CD14-positive monocyte (primary cell): ENCODE measurements at regions of chr11 and their contacts with region 1.

Region 1: GRCh38 chr11:73242251-73243079 is 24.4 kb downstream of the P2RY2 start:
- DNase-seq: peak; percentile 29 to 70 (median 53)
- H3K4me3 ChIP-seq: no peak overlapping the region
- H3K4me3 Mint-ChIP-seq: peak overlapping the region in 1 of 2 donors; percentile 59
- H3K27ac ChIP-seq: peak overlapping the region; percentile 31 to 52
- H3K27ac Mint-ChIP-seq: peak overlapping the region in 6 of 7 donors; percentile 3 to 78 (median 48)
- H3K4me1 ChIP-seq: peaks cover 0 to 6% of the 10 kb centered on the region in 2 donors
- H3K4me1 Mint-ChIP-seq: peaks cover 19% of the 10 kb centered on the region
- H3K27me3 ChIP-seq: no peaks in the 10 kb centered on the region
- H3K27me3 Mint-ChIP-seq: no peaks in the 10 kb centered on the region
- CTCF ChIP-seq: peak; percentile 96

Region 2: GRCh38 chr11:72831513-72832300 is 410.8 kb before region 1 on chr11:
- intact Hi-C with region 1: loop called (anchors 2 to 10 kb)
- DNase-seq: peak; percentile 49 to 66 (median 64)
- H3K4me3 ChIP-seq: no peak overlapping the region
- H3K4me3 Mint-ChIP-seq: no peak overlapping the region
- H3K27ac ChIP-seq: peak overlapping the region; percentile 36 to 57
- H3K27ac Mint-ChIP-seq: peak overlapping the region in 6 of 7 donors; percentile 8 to 77 (median 57)
- H3K4me1 ChIP-seq: peaks cover 46 to 49% of the 10 kb centered on the region in 2 donors
- H3K4me1 Mint-ChIP-seq: peaks cover 58% of the 10 kb centered on the region
- H3K27me3 ChIP-seq: no peaks in the 10 kb centered on the region
- H3K27me3 Mint-ChIP-seq: peaks cover 0 to 2% (median 2%) of the 10 kb centered on the region in 3 donors
- CTCF ChIP-seq: peak; percentile 89

Region 3: GRCh38 chr11:72924568-72925190 is 317.8 kb before region 1 on chr11:
- intact Hi-C with region 1: loop called in 1 of 2 experiments (anchors 5 kb)
- DNase-seq: peak; percentile 12 to 54 (median 37)
- H3K4me3 ChIP-seq: no peak overlapping the region
- H3K4me3 Mint-ChIP-seq: no peak overlapping the region
- H3K27ac ChIP-seq: peak overlapping the region in 1 of 2 donors; percentile 55
- H3K27ac Mint-ChIP-seq: peak overlapping the region in 2 of 7 donors; percentile 79 to 81
- H3K4me1 ChIP-seq: peaks cover 7 to 16% of the 10 kb centered on the region in 2 donors
- H3K4me1 Mint-ChIP-seq: peaks cover 21% of the 10 kb centered on the region
- H3K27me3 ChIP-seq: no peaks in the 10 kb centered on the region
- H3K27me3 Mint-ChIP-seq: no peaks in the 10 kb centered on the region
- CTCF ChIP-seq: peak; percentile 71